ENCODE measurements at regions of chr4 and their contacts with region 1.

Region 1: GRCh38 chr4:38759113-38759789 is 23.5 kb downstream of the TLR10 start:
- DNase-seq: peak; percentile 77
- ATAC-seq: peak; percentile 51
- H3K4me3 ChIP-seq: no peak overlapping the region
- H3K27ac ChIP-seq: peak overlapping the region; percentile 95; the same call in 1 of the 2 replicates
- H3K4me1 ChIP-seq: peaks cover 42% of the 10 kb centered on the region
- H3K27me3 ChIP-seq: no peaks in the 10 kb centered on the region
- CTCF ChIP-seq: peak; percentile 46 to 75 (median 74)
- EP300 ChIP-seq: no peak
- POLR2A ChIP-seq: no peak
- RAD21 ChIP-seq: peak; percentile 93

Region 2: DNA sequence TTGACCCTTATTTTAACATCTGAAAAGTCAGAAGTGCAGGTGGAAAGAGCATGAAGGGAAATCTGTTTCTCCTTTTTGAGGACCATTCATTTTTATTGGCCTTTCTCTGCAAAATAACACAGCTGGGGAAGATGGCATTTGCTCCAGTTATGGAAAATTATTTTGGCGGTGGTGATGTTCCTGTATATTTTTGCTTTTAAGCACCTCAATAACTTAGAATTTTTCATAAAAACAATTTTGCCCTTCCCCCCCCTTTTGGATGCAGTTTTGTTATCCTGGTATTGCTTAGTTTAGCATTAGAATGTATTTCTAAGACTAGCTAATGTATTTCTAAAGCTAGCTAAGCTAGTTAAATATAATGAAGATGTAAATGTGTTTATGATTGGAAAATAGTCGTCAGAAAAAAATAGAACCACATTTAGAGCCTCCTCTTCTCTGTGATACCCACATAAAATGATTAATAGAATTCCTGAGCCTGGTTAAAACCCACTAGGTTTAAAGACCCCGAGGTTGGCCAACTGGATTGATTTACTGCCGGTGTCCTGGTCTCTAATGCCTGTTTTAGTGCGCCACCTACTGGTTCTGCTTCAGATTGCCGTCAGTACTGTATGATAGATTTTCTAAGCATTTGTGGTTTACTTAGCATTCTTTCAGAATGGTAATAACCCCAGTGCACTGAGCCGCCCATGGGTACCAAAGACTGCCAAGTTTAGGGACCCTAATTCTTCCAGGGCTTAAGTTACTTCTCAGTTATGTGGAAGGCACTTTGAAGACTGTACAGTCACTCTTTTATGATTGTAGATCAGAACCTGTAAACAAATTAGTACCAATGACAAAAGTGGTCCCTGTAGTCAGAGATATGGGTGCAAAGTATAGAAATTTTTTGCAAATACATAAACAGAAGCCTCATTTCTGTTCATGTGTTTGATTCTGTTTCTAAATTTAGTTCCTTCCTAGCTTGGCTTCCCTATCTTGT is 83.8 kb before region 1 on chr4:
- CTCF ChIA-PET with region 1: interaction called, 3 read pairs
- POLR2A ChIA-PET with region 1: no interaction called
- RAD21 ChIA-PET with region 1: interaction called, 5 read pairs
- SMC1A ChIA-PET with region 1: interaction called, 10 read pairs
- in situ Hi-C with region 1: no loop called
- intact Hi-C with region 1: no loop called
- DNase-seq: no peak
- ATAC-seq: peak; percentile 81
- H3K4me3 ChIP-seq: no peak overlapping the region
- H3K27ac ChIP-seq: no peak overlapping the region
- H3K4me1 ChIP-seq: peaks cover 47% of the 10 kb centered on the region
- H3K27me3 ChIP-seq: no peaks in the 10 kb centered on the region; a peak in 1 of 4 replicates
- CTCF ChIP-seq: peak; percentile 80 to 96 (median 89)
- EP300 ChIP-seq: peak in 1 of 2 experiments; percentile 36; a peak in 1 of 4 replicates
- POLR2A ChIP-seq: no peak
- RAD21 ChIP-seq: peak; percentile 100

Region 3: GRCh38 chr4:38782452-38783108 is 23.3 kb after region 1 on chr4 and contains the start of gene TLR10:
- CTCF ChIA-PET with region 1: interaction called, 449 read pairs
- POLR2A ChIA-PET with region 1: interaction called, 196 read pairs
- RAD21 ChIA-PET with region 1: interaction called, 437 read pairs
- SMC1A ChIA-PET with region 1: interaction called, 468 read pairs
- in situ Hi-C with region 1: no loop called
- intact Hi-C with region 1: loop called (anchors 1 kb)
- DNase-seq: peak; percentile 82
- ATAC-seq: peak; percentile 74
- H3K4me3 ChIP-seq: peak within 1 kb of the TSS; percentile 81
- H3K27ac ChIP-seq: peak within 1 kb of the TSS; percentile 96
- H3K4me1 ChIP-seq: peaks cover 22% of the 10 kb centered on the region
- H3K27me3 ChIP-seq: no peaks in the 10 kb centered on the region
- CTCF ChIP-seq: peak; percentile 60 to 68 (median 63)
- EP300 ChIP-seq: no peak
- POLR2A ChIP-seq: peak; percentile 72
- RAD21 ChIP-seq: peak; percentile 83
- polyA plus RNA-seq, gene TLR10: 31.5 to 41.8 TPM

Region 4: DNA sequence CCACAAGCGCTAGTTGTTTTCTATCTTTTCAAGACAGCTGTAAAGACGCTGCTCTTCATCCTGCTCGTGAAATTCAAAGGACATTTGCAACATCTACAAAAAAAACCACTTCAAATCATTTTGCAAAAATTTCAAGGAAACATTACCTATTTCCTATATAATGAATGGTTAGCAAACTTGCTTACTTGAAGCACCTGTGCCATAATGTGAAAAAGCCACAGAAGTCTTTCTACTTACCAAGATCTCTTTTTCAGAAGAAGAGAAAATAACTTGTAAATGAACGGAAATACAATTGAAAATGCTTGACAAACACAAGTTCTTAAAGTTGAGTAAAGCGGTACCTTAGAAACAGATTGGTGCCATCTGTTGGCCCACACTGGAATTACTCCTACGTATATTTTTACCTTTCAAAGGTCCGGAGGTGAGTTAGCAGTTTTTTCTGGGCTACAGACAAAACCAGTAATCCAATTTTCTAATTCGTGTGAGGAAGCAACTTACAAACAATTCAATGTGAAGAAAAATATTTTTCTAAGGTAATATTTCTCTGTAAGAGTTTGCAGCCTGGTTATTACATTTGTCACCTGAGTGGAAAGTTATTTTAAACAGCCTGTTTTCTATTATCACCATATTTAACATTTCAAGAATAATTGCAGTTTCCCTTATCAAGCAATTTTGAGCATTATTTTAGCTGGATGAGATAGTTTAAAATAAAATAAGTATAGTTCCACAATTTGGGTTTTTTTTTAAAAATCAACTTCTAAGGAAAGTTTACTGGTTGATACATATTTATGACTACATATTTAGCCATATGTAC is 97.5 kb after region 1 on chr4 and contains the start of gene TLR6:
- CTCF ChIA-PET with region 1: interaction called, 172 read pairs
- POLR2A ChIA-PET with region 1: interaction called, 39 read pairs
- RAD21 ChIA-PET with region 1: interaction called, 105 read pairs
- SMC1A ChIA-PET with region 1: interaction called, 136 read pairs
- in situ Hi-C with region 1: loop called (anchors 5 kb)
- intact Hi-C with region 1: loop called (anchors 1 kb)
- DNase-seq: peak; percentile 91
- ATAC-seq: peak; percentile 59
- H3K4me3 ChIP-seq: peak within 1 kb of the TSS; percentile 75
- H3K27ac ChIP-seq: peak within 1 kb of the TSS; percentile 96
- H3K4me1 ChIP-seq: peaks cover 14% of the 10 kb centered on the region
- H3K27me3 ChIP-seq: no peaks in the 10 kb centered on the region
- CTCF ChIP-seq: peak; percentile 62 to 79 (median 77)
- EP300 ChIP-seq: peak in 1 of 2 experiments; percentile 51; a peak in 1 of 4 replicates
- POLR2A ChIP-seq: no peak
- RAD21 ChIP-seq: peak; percentile 88
- polyA plus RNA-seq, gene TLR6: 1.1 to 1.5 TPM

Region 5: GRCh38 chr4:38894340-38894982 is 135.2 kb after region 1 on chr4:
- CTCF ChIA-PET with region 1: interaction called, 84 read pairs
- POLR2A ChIA-PET with region 1: interaction called, 7 read pairs
- RAD21 ChIA-PET with region 1: interaction called, 49 read pairs
- SMC1A ChIA-PET with region 1: interaction called, 125 read pairs
- in situ Hi-C with region 1: no loop called
- intact Hi-C with region 1: loop called (anchors 2 kb)
- DNase-seq: no peak
- ATAC-seq: peak; percentile 42
- H3K4me3 ChIP-seq: no peak overlapping the region
- H3K27ac ChIP-seq: no peak overlapping the region
- H3K4me1 ChIP-seq: no peaks in the 10 kb centered on the region
- H3K27me3 ChIP-seq: no peaks in the 10 kb centered on the region
- CTCF ChIP-seq: peak in 2 of 3 experiments; percentile 4 to 27; a peak in 2 of 6 replicates
- EP300 ChIP-seq: no peak
- POLR2A ChIP-seq: no peak
- RAD21 ChIP-seq: no peak

Region 6: DNA sequence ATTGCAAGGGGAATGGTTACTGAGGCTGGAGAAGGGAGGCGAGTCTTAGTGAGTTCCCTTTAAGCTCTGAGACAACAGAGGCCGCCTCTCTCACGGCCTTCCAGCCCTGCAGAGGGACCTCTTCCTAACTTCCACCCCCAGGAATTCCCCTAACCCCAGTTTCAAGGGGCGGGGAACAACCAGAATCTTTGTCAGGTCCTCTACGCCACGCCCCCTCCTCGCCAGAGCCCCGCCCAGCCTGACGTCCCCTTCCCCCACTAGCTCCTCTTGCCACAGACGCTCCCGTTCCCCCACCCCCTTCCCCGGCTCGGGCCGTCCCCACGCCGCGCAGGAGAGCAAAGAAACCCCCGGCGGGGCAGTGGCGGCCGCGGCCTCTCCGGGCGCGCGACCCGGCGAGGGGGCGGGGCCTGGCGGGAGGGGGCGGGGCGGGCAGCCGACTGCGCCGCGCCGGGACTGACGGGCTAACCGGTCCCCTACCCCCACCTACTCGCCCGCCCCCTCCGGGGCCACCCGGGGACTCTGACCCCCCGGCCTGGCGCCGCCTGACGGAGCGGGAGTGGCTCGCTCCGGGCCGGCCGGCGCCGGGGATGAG is 285.2 kb after region 1 on chr4:
- CTCF ChIA-PET with region 1: interaction called, 7 read pairs
- POLR2A ChIA-PET with region 1: interaction called, 8 read pairs
- RAD21 ChIA-PET with region 1: interaction called, 14 read pairs
- SMC1A ChIA-PET with region 1: interaction called, 9 read pairs
- in situ Hi-C with region 1: loop called (anchors 25 kb)
- intact Hi-C with region 1: no loop called
- DNase-seq: peak; percentile 90
- ATAC-seq: peak; percentile 83
- H3K4me3 ChIP-seq: peak overlapping the region; percentile 83
- H3K27ac ChIP-seq: peak overlapping the region; percentile 81
- H3K4me1 ChIP-seq: peaks cover 14% of the 10 kb centered on the region
- H3K27me3 ChIP-seq: no peaks in the 10 kb centered on the region
- CTCF ChIP-seq: peak in 1 of 3 experiments; percentile 23; a peak in 1 of 6 replicates
- EP300 ChIP-seq: peak in 1 of 2 experiments; percentile 52; a peak in 1 of 4 replicates
- POLR2A ChIP-seq: peak; percentile 74
- RAD21 ChIP-seq: no peak

Region 7: DNA sequence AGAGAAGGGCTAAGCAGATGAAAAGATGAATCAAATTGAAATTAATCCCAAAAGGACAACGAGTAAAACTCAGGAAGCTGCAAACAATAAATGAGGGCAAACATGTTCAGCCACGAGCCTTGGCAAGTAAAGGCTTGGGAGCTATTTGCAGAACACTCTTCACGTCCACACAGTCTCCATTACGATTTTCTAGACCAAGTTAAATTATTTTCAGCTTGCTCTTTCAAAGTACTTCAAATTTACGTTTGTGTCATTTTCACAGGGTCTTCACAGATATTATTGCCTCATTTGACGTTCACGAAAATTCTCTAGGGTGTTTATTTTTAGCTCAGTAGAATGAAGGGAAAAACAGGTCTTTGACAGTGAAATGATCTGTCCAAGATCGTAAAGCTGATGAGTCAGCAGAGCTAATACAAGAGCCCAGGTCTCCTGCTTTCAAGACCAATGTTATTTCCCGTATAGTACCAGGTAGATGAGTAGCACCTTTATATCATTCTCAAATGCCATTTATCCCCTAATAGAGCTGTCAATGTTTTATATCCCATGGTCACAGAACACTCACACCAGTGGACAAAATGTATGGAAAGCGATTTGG is 668.4 kb after region 1 on chr4:
- CTCF ChIA-PET with region 1: no interaction called
- POLR2A ChIA-PET with region 1: no interaction called
- RAD21 ChIA-PET with region 1: no interaction called
- SMC1A ChIA-PET with region 1: no interaction called
- in situ Hi-C with region 1: no loop called
- intact Hi-C with region 1: no loop called
- DNase-seq: no peak
- ATAC-seq: no peak
- H3K4me3 ChIP-seq: no peak overlapping the region
- H3K27ac ChIP-seq: no peak overlapping the region
- H3K4me1 ChIP-seq: no peaks in the 10 kb centered on the region
- H3K27me3 ChIP-seq: no peaks in the 10 kb centered on the region; a peak in 1 of 4 replicates
- CTCF ChIP-seq: no peak
- EP300 ChIP-seq: no peak
- POLR2A ChIP-seq: no peak
- RAD21 ChIP-seq: no peak